Heart left ventricle (tissue), 16 donors: ENCODE measurements at regions of chr1 and their contacts with region 1.

Region 1: GRCh38 chr1:93695436-93696005 is 13.9 kb upstream of the BCAR3 start:
- DNase-seq: no peak
- ATAC-seq: no peak
- H3K4me3 ChIP-seq: no peak overlapping the region
- H3K27ac ChIP-seq: no peak overlapping the region
- H3K4me1 ChIP-seq: peaks cover 0 to 45% (median 0%) of the 10 kb centered on the region in 12 donors
- H3K27me3 ChIP-seq: no peaks in the 10 kb centered on the region
- CTCF ChIP-seq: no peak
- POLR2A ChIP-seq: no peak

Region 2: GRCh38 chr1:93502561-93502960 is 193.0 kb before region 1 on chr1:
- intact Hi-C with region 1: no loop called
- DNase-seq: no peak
- ATAC-seq: no peak
- H3K4me3 ChIP-seq: no peak overlapping the region
- H3K27ac ChIP-seq: no peak overlapping the region
- H3K4me1 ChIP-seq: peaks cover 0 to 22% (median 2%) of the 10 kb centered on the region in 12 donors
- H3K27me3 ChIP-seq: no peaks in the 10 kb centered on the region
- CTCF ChIP-seq: no peak
- POLR2A ChIP-seq: no peak

Region 3: DNA sequence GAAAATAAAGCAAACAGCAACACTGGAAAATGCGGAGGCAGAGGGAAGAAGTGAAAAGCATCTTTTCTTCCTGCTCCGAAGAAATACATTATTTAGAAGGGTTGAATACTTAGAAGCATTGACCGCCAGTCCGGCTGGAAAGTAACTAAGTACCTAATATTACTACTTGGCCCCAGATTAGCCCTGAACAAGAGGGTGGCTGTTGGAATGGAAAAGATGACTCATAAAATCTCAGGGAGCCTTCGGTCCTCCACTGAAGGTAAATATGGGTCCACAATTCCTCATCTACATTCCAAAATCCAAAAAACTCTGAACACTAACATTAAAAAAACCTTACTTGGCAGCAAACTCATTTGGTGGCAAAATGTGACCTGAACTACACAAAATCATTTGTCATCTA is 54.0 kb before region 1 on chr1:
- intact Hi-C with region 1: loop called in 1 of 10 experiments (anchors 5 kb)
- DNase-seq: no peak
- ATAC-seq: no peak
- H3K4me3 ChIP-seq: no peak overlapping the region
- H3K27ac ChIP-seq: no peak overlapping the region
- H3K4me1 ChIP-seq: peaks cover 0 to 8% (median 0%) of the 10 kb centered on the region in 12 donors
- H3K27me3 ChIP-seq: no peaks in the 10 kb centered on the region
- CTCF ChIP-seq: no peak
- POLR2A ChIP-seq: no peak